Posterior vena cava (tissue), 2 donors: ENCODE measurements at regions of chr17 and their contacts with region 1.

Region 1: DNA sequence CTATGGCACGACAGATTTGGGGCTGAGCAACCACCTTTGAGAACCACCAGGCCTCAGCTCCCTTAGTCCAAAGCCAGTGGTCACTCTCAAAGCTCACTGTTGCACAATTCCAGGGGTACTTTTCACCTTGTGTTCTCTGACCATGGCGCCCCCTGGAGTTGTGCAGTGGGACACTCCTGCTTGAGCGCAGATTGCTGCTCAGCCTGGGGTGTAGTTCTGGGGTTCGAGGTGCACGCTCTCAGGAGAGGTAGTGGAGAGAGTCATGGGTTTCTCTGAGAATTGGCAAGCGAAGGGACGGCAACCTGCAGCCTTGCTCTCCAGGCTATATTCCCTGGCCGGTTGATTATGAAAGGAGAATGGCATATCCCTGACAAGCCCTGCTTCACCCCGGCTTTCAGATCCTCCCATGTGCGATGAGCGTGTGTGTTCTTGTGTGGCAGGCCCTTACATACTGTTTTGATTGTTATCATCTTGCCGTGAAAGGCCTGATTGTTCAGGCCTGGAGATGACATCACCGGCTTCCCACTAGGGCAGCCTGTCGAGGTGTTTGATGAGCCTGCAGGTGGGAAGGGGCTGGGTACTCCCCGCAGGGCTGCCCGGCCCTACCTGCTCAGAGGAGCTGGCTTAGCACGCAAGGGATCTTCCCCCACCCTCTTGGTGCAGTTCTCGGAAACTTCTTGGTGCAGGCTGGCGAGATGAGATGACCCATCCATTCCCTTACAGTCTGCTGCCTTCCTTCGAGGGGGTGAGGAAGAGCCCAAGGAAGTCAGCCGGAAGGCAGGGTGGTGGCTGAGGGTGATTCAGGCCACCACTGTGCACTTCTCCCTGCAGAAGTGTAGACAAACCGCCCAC is 431.2 kb downstream of the SLC39A11 start:
- DNase-seq: peak; percentile 34

Region 2: DNA sequence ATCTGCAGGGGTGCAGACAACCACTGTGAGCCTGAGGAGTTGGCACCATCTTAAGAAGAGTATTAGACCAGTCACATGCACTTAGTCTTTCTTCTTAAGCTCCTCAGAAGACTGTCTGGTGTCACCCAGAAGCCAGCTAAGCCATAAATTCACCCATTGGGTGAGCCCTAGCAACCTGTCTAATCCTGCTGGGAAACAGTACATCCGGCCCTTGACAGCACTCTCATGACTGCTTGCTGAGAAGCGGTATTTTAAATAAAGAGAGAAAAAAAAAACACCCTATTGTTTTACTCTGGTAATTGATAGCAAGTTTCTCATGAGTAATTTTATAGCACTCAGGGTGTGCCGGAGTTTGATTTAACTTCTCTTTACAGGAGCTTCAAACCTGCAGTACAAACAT is 405.8 kb before region 1 on chr17:
- intact Hi-C with region 1: no loop called
- DNase-seq: no peak

Region 3: DNA sequence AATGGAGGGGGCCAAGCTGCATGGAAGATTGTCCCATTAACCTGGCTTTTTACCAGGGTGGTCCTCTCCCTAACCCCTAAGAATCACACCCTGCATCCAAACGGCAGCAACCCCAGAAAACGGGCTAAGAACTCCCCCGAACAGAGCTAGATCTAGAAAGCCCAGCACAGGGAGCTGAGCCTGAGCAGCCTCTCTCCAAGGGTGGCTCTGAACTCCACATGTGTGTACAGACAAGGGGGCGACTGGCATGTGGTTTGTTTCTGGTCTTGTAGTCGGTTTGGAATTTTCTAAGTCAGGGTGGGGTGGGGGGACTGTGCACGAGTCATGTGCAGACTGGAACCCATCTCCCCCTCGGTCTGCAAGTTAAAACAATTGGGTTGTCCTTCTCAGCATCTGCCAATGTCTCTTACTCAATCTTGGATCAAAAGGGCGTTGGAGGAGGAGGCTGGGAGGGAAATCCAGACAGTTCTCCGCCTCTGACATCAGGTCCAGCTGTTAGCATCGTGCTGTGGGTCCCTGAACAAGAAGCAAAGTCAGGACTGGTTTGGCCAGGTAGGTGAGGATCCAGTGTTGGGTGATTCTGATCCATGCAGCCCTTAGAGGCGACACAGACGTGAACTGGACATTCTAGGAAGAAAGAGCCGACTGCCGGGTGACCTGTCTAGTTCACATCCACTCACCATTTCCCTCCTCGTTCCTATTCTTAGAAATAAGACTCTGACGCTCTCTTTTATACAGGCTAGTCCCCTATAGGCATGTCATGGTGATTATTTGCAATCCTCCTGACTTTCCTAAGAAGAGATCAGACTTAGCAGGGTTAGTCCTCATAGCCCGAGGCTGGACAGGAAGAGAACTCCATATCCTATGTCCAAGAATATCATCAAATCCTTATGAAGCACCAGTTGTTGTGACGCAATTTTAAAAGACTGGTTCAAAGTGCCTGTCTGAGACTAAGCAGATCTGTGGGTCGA is 158.7 kb before region 1 on chr17:
- intact Hi-C with region 1: no loop called
- DNase-seq: no peak

Region 4: GRCh38 chr17:72631949-72632684 is 29.2 kb before region 1 on chr17:
- intact Hi-C with region 1: no loop called
- DNase-seq: no peak

Region 5: GRCh38 chr17:72683506-72684404 is 22.4 kb after region 1 on chr17:
- intact Hi-C with region 1: loop called in 1 of 2 experiments (anchors 1 kb)
- DNase-seq: peak; percentile 69